SK-N-SH (cell line): ENCODE measurements at regions of chr1 and their contacts with region 1.

Region 1: DNA sequence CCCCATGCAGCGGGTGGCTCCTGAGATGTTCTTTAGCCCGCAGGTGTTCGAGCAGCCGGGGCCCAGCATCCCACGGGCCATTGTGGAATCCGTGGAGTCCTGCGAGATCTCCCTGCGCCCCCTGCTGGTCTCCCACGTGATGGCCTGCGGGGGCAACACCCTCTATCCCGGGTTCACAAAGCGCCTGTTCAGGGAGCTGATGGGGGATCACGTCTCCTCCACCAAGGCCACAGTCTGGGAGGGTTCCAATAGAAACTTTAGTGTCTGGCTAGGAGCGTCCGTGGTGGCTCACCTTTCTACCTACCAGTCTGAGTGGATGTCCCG is 71.0 kb downstream of the ACTL8 start:
- DNase-seq: peak; percentile 83
- H3K4me3 ChIP-seq: no peak overlapping the region; a peak in 1 of 4 replicates
- H3K27ac ChIP-seq: no peak overlapping the region
- H3K4me1 ChIP-seq: peaks cover 0 to 13% of the 10 kb centered on the region in 2 experiments; a peak in 2 of 4 replicates
- H3K27me3 ChIP-seq: no peaks in the 10 kb centered on the region
- CTCF ChIP-seq: peak; percentile 62
- EP300 ChIP-seq: no peak
- RAD21 ChIP-seq: peak; percentile 70

Region 2: GRCh38 chr1:17653728-17654351 is 172.3 kb before region 1 on chr1:
- CTCF ChIA-PET with region 1: interaction called, 13 read pairs
- POLR2A ChIA-PET with region 1: no interaction called
- DNase-seq: peak; percentile 85
- H3K4me3 ChIP-seq: no peak overlapping the region; a peak in 1 of 4 replicates
- H3K27ac ChIP-seq: no peak overlapping the region
- H3K4me1 ChIP-seq: peaks cover 0 to 6% of the 10 kb centered on the region in 2 experiments; a peak in 1 of 4 replicates
- H3K27me3 ChIP-seq: no peaks in the 10 kb centered on the region
- CTCF ChIP-seq: peak; percentile 79
- EP300 ChIP-seq: no peak
- RAD21 ChIP-seq: peak; percentile 84

Region 3: GRCh38 chr1:17808816-17809215 is 17.3 kb before region 1 on chr1:
- CTCF ChIA-PET with region 1: interaction called, 20 read pairs
- POLR2A ChIA-PET with region 1: no interaction called
- DNase-seq: no peak
- H3K4me3 ChIP-seq: no peak overlapping the region
- H3K27ac ChIP-seq: no peak overlapping the region
- H3K4me1 ChIP-seq: no peaks in the 10 kb centered on the region
- H3K27me3 ChIP-seq: no peaks in the 10 kb centered on the region
- CTCF ChIP-seq: no peak
- EP300 ChIP-seq: no peak
- RAD21 ChIP-seq: no peak

Region 4: DNA sequence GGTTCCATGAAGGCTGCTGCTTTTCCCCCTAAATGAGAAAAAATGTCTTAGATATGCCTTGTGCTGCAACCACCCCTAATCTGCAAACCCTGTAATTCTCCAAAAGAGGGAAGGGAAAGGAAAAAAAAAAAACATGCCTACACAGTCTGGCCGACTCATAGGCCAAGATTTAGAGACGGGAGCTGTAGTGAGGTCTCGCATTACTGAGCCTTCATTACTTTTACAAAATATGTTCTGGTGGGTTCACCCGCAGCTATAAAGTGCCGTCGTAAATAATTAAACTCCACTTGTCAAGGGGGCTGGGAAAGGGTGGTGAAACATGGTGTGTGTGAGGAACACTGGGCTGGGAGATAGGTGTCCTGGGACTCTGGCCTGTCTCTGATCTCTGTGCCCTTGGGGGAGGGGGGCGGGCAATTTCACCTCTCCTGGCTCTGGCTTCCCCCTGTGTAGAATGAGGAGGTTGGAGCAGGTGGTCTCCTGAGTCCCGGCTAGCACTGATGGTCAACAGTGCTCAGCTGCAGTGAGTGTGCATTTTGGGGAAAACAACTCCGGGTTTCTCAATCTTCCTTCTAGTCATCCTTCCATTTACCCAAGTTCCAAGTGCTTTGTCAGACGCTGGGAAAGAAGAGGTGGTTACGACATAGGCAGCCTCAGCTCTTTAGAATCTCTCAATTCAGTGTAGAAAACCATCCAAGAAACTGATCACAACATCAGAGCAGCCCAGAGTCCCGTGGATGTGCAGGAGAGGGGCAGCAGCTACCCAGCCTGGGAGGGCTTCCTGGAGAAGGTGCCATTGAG is 11.3 kb after region 1 on chr1:
- CTCF ChIA-PET with region 1: interaction called, 14 read pairs
- POLR2A ChIA-PET with region 1: no interaction called
- DNase-seq: no peak
- H3K4me3 ChIP-seq: no peak overlapping the region
- H3K27ac ChIP-seq: no peak overlapping the region
- H3K4me1 ChIP-seq: peaks cover 0 to 18% of the 10 kb centered on the region in 2 experiments; a peak in 2 of 4 replicates
- H3K27me3 ChIP-seq: no peaks in the 10 kb centered on the region
- CTCF ChIP-seq: no peak
- EP300 ChIP-seq: no peak
- RAD21 ChIP-seq: no peak

Region 5: GRCh38 chr1:17844135-17844826 is 18.2 kb after region 1 on chr1:
- CTCF ChIA-PET with region 1: interaction called, 11 read pairs
- POLR2A ChIA-PET with region 1: no interaction called
- DNase-seq: no peak
- H3K4me3 ChIP-seq: no peak overlapping the region
- H3K27ac ChIP-seq: no peak overlapping the region
- H3K4me1 ChIP-seq: no peaks in the 10 kb centered on the region; a peak in 1 of 4 replicates
- H3K27me3 ChIP-seq: no peaks in the 10 kb centered on the region
- CTCF ChIP-seq: no peak
- EP300 ChIP-seq: no peak
- RAD21 ChIP-seq: no peak